Naive thymus-derived CD4-positive, alpha-beta T cell (primary cell): ENCODE measurements at regions of chr7 and their contacts with region 1.

Region 1: GRCh38 chr7:141674702-141675101 is 27.3 kb downstream of the DENND11 start:
- DNase-seq: no peak
- ATAC-seq: peak; percentile 37
- H3K4me3 ChIP-seq: no peak overlapping the region
- H3K4me3 Mint-ChIP-seq: peak overlapping the region in 1 of 10 donors; percentile 46
- H3K27ac ChIP-seq: no peak overlapping the region
- H3K27ac Mint-ChIP-seq: peak overlapping the region in 5 of 9 donors; percentile 12 to 87 (median 51)
- H3K4me1 ChIP-seq: no peaks in the 10 kb centered on the region
- H3K4me1 Mint-ChIP-seq: peaks cover 0 to 45% (median 0%) of the 10 kb centered on the region in 7 donors
- H3K27me3 ChIP-seq: no peaks in the 10 kb centered on the region
- H3K27me3 Mint-ChIP-seq: no peaks in the 10 kb centered on the region

Region 2: GRCh38 chr7:141701489-141702046 is 26.9 kb after region 1 on chr7:
- CTCF ChIA-PET with region 1: no interaction called
- POLR2A ChIA-PET with region 1: no interaction called
- intact Hi-C with region 1: loop called in 1 of 2 experiments (anchors 1 kb)
- DNase-seq: peak; percentile 50 to 81 (median 76)
- ATAC-seq: peak; percentile 90
- H3K4me3 ChIP-seq: peak overlapping the region; percentile 51
- H3K4me3 Mint-ChIP-seq: peak overlapping the region; percentile 80 to 95 (median 88)
- H3K27ac ChIP-seq: peak overlapping the region; percentile 90
- H3K27ac Mint-ChIP-seq: peak overlapping the region; percentile 77 to 96 (median 88)
- H3K4me1 ChIP-seq: peaks cover 7 to 19% of the 10 kb centered on the region in 2 donors
- H3K4me1 Mint-ChIP-seq: peaks cover 39 to 56% (median 49%) of the 10 kb centered on the region in 7 donors
- H3K27me3 ChIP-seq: no peaks in the 10 kb centered on the region
- H3K27me3 Mint-ChIP-seq: peaks cover 0 to 16% (median 0%) of the 10 kb centered on the region in 5 donors